ENCODE measurements at regions of chr15 and their contacts with region 1.

Region 1: GRCh38 chr15:67839929-67840748 is at the start of gene RNU6-1:
- DNase-seq: peak; percentile 94 to 96 (median 95)
- ATAC-seq: peak; percentile 86 to 91 (median 88)
- H3K4me3 ChIP-seq: peak within 1 kb of the TSS; percentile 71 to 95 (median 71)
- H3K27ac ChIP-seq: peak within 1 kb of the TSS; percentile 92 to 93 (median 92)
- H3K4me1 ChIP-seq: peaks cover 0 to 26% (median 11%) of the 10 kb centered on the region in 4 donors
- H3K27me3 ChIP-seq: peaks cover 0 to 10% of the 10 kb centered on the region in 2 donors
- CTCF ChIP-seq: no peak
- POLR2A ChIP-seq: peak; percentile 82
- total RNA-seq, gene RNU6-1: not detected

Region 2: DNA sequence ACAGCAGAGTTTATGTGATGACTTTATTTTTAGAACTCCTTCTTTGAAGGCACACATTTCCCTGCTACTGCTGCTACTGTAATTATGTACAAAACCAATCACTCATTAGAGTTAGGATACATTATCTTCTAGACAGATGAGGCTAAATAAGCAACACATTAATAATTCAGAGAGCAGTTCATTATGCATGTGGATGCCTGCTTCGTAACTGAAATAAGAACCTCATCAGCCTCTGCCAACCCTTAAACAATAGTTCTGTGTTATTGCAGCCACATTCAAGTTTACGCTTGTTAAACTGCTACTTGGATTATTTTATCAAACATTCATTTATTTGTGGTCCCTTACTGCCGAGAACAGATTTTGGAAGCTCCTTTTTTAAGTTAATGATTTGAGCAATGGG is 371.7 kb before region 1 on chr15:
- intact Hi-C with region 1: loop called in 1 of 2 experiments (anchors 10 kb)
- DNase-seq: no peak
- ATAC-seq: no peak
- H3K4me3 ChIP-seq: no peak overlapping the region
- H3K27ac ChIP-seq: no peak overlapping the region
- H3K4me1 ChIP-seq: no peaks in the 10 kb centered on the region
- H3K27me3 ChIP-seq: no peaks in the 10 kb centered on the region
- CTCF ChIP-seq: no peak
- POLR2A ChIP-seq: no peak

Region 3: DNA sequence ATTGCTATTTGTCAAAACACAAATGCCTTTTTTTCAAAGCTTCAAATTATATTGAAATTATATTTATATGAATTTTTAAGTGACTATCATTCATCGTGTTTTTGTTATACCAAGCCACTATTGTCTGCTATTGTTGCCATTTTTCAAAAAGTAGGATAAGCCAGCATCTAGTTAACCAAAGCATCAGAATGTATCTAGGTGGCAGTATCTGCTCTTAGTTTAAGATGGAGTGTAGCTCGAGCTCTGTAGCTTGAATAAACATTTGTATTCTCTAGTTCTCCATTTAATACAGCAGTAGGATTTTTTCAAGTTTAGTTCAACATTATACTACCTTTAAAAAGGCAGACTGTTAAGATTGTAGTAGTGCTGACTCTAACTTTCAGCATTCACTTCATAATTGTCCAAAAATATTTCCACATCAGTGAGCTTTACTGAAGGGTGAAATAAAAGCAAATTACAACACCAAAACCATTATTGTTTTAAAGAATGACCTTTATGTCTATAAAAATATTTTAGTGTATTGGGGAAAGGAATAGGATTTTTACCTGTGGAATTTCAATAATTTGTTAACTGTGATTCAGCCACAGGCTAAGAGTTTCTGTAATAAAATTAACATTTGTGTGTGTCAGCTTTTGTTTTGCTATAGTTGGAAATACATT is 338.8 kb before region 1 on chr15:
- intact Hi-C with region 1: loop called in 1 of 2 experiments (anchors 10 kb)
- DNase-seq: no peak
- ATAC-seq: peak; percentile 74 to 84 (median 81)
- H3K4me3 ChIP-seq: no peak overlapping the region
- H3K27ac ChIP-seq: no peak overlapping the region
- H3K4me1 ChIP-seq: no peaks in the 10 kb centered on the region
- H3K27me3 ChIP-seq: no peaks in the 10 kb centered on the region
- CTCF ChIP-seq: peak; percentile 28 to 51 (median 41)
- POLR2A ChIP-seq: no peak

Region 4: GRCh38 chr15:67746022-67746421 is 94.1 kb before region 1 on chr15:
- intact Hi-C with region 1: no loop called
- DNase-seq: no peak
- ATAC-seq: peak in 1 of 4 donors; percentile 18
- H3K4me3 ChIP-seq: no peak overlapping the region
- H3K27ac ChIP-seq: no peak overlapping the region
- H3K4me1 ChIP-seq: peaks cover 0 to 5% (median 0%) of the 10 kb centered on the region in 4 donors
- H3K27me3 ChIP-seq: no peaks in the 10 kb centered on the region
- CTCF ChIP-seq: no peak
- POLR2A ChIP-seq: no peak